Sigmoid colon (tissue), 7 donors: ENCODE measurements at regions of chr10 and their contacts with region 1.

Region 1: GRCh38 chr10:32367793-32368453 is 21.0 kb upstream of the EPC1 start:
- DNase-seq: peak; percentile 83
- H3K4me3 ChIP-seq: peak overlapping the region in 1 of 4 donors; percentile 15
- H3K27ac ChIP-seq: peak overlapping the region; percentile 6 to 62 (median 37)
- H3K4me1 ChIP-seq: peaks cover 0 to 59% (median 48%) of the 10 kb centered on the region in 4 donors
- H3K27me3 ChIP-seq: no peaks in the 10 kb centered on the region
- CTCF ChIP-seq: peak; percentile 18 to 79 (median 70)
- EP300 ChIP-seq: no peak
- POLR2A ChIP-seq: no peak

Region 2: DNA sequence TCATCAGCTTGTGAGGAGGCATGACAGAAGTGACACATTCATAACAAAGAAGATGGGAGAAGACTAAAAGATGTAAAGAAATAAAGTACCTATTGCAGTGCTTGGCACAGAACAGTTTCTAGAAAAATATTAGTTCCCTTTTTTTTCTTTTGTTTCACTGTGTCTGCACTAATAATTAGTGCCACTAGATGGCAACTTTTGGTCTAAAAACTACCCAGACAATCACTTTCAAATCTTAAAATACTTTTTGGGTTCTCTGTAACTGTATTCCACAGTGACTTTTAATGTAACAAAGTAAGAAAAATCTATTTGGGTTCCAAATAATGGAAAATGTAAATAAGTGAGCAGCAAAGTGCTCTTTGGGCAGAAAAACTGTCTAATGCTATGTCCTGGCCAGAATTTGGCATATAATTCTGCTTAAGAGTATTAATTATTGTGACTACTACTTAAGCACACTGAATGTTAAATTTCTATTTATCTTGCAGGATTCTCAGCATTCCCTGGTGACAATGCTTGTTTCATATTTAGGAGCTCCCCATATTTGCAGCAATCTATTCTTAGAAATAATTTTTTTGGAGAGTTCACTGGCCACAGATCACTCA is 176.9 kb before region 1 on chr10:
- intact Hi-C with region 1: loop called (anchors 5 kb)
- DNase-seq: no peak
- H3K4me3 ChIP-seq: no peak overlapping the region
- H3K27ac ChIP-seq: no peak overlapping the region
- H3K4me1 ChIP-seq: peaks cover 0 to 5% (median 2%) of the 10 kb centered on the region in 4 donors
- H3K27me3 ChIP-seq: no peaks in the 10 kb centered on the region
- CTCF ChIP-seq: peak; percentile 31 to 77 (median 58)
- EP300 ChIP-seq: no peak
- POLR2A ChIP-seq: no peak

Region 3: DNA sequence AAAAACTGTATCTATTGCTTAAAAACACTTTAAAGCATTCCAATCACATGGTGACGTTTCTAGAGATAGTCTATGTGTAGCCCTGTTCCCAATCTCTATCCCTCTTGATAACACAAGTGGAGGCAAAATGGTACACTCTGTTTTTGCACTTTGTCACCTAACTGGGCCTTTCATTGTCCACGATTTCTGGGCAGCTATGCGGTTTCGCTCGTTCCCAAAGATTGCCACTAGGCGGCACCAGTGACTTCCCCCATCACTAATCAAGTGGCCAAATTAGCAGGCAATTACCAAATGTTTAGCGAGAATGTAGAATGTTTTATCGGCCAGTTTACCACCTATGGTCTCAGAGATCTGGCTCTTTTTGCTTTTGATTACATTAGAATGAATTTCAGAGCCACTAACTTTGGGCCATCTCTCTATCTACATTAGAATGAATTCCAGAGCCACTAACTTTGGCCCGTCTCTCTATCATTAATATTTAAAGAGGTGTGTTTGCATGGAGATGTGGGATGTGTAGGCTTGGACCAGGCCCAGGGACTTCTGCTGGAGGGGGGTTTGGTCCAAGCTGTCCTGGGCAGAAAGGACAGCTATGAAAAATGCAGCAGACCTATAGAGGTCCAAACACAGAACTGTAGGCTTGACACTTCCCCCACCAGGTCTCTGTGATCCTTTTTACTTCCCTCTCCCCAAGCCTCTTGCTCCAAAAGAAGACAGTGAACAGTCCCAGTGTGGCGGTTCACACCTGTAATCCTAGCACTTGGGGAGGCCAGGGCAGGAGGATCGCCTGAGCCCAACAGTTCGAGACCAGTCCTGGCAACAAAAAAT is 111.1 kb before region 1 on chr10:
- intact Hi-C with region 1: loop called (anchors 1 kb)
- DNase-seq: peak; percentile 74
- H3K4me3 ChIP-seq: no peak overlapping the region
- H3K27ac ChIP-seq: no peak overlapping the region
- H3K4me1 ChIP-seq: peaks cover 0 to 5% (median 2%) of the 10 kb centered on the region in 4 donors
- H3K27me3 ChIP-seq: no peaks in the 10 kb centered on the region
- CTCF ChIP-seq: peak; percentile 55 to 90 (median 84)
- EP300 ChIP-seq: no peak
- POLR2A ChIP-seq: no peak

Region 4: GRCh38 chr10:32271617-32272016 is 96.3 kb before region 1 on chr10:
- intact Hi-C with region 1: no loop called
- DNase-seq: no peak
- H3K4me3 ChIP-seq: no peak overlapping the region
- H3K27ac ChIP-seq: no peak overlapping the region
- H3K4me1 ChIP-seq: peaks cover 0 to 15% (median 7%) of the 10 kb centered on the region in 4 donors
- H3K27me3 ChIP-seq: no peaks in the 10 kb centered on the region
- CTCF ChIP-seq: no peak
- EP300 ChIP-seq: no peak
- POLR2A ChIP-seq: no peak

Region 5: GRCh38 chr10:32445740-32446535 is 78.0 kb after region 1 on chr10 and contains the start of gene CCDC7:
- intact Hi-C with region 1: loop called (anchors 2 kb)
- DNase-seq: peak; percentile 91
- H3K4me3 ChIP-seq: peak within 1 kb of the TSS; percentile 60 to 73 (median 61)
- H3K27ac ChIP-seq: peak within 1 kb of the TSS; percentile 91 to 97 (median 94)
- H3K4me1 ChIP-seq: peaks cover 0 to 20% (median 10%) of the 10 kb centered on the region in 4 donors
- H3K27me3 ChIP-seq: no peaks in the 10 kb centered on the region
- CTCF ChIP-seq: peak in 2 of 4 experiments; percentile 23 to 46
- EP300 ChIP-seq: no peak
- POLR2A ChIP-seq: peak; percentile 19 to 48
- total RNA-seq, gene CCDC7: 42.9 to 84.9 (median 50.5) TPM